Activated CD8-positive, alpha-beta T cell treated with anti-CD3 and anti-CD28 coated beads, Interleukin-2, amount 10 ng/mL, durations not matched to agents 7 days and 5 days (primary cell): ENCODE measurements at regions of chrX and their contacts with region 1.

Region 1: DNA sequence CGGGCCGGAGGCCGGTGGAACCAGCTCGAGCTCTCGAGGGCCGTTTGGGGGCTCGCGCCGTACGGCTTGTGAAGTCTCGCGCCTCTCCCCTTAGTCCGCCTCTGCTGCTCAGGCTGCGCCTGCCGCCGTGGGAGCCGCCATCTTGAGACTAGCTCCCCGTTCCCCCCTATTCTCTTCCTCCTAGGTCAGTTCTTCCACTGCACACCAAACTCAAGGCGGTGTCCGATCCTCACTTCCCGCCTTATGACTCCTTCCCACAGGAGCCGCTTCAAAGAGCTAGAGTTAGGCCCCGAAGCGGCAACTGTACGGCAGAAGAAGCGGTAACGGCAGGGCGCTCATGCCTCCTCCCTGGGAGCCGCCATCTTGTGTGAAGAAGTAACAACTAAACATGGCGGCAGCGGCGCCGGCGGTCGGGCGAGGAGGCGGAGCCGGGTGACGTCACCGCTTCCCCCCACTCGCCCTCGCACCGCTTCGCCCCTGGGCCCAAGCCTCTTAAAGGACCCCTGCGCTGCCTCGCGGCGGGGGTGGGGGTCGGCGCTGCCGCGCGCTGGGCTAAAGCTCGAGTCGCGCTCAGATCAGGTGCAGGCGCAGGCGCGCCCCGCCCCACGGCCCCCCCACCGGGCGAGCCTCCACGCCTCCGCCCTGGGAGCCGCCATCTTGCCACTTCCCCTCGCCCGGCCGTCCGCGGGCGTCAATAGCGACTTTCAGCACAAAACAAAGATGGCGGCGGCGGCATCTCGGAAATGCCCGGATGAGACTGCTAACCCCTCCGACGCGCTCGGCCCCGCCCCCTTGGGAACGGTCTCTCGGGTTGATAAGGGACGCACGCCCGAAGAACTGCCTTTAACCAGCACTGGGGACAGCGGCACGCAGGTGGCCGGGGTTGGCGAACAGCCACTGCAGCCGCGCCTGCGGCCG is at the start of gene HCFC1:
- DNase-seq: peak; percentile 92
- ATAC-seq: peak; percentile 38
- H3K4me3 Mint-ChIP-seq: peak within 1 kb of the TSS; percentile 100
- H3K27ac Mint-ChIP-seq: peak within 1 kb of the TSS; percentile 100
- H3K4me1 Mint-ChIP-seq: peaks cover 32% of the 10 kb centered on the region
- H3K27me3 Mint-ChIP-seq: no peaks in the 10 kb centered on the region
- total RNA-seq, gene HCFC1: 141 to 146 TPM

Region 2: GRCh38 chrX:153828723-153829548 is 142.8 kb before region 1 on chrX:
- CTCF ChIA-PET with region 1: no interaction called
- POLR2A ChIA-PET with region 1: no interaction called
- DNase-seq: no peak
- ATAC-seq: no peak
- H3K4me3 Mint-ChIP-seq: no peak overlapping the region
- H3K27ac Mint-ChIP-seq: no peak overlapping the region
- H3K4me1 Mint-ChIP-seq: peaks cover 6% of the 10 kb centered on the region
- H3K27me3 Mint-ChIP-seq: peaks cover 36% of the 10 kb centered on the region

Region 3: DNA sequence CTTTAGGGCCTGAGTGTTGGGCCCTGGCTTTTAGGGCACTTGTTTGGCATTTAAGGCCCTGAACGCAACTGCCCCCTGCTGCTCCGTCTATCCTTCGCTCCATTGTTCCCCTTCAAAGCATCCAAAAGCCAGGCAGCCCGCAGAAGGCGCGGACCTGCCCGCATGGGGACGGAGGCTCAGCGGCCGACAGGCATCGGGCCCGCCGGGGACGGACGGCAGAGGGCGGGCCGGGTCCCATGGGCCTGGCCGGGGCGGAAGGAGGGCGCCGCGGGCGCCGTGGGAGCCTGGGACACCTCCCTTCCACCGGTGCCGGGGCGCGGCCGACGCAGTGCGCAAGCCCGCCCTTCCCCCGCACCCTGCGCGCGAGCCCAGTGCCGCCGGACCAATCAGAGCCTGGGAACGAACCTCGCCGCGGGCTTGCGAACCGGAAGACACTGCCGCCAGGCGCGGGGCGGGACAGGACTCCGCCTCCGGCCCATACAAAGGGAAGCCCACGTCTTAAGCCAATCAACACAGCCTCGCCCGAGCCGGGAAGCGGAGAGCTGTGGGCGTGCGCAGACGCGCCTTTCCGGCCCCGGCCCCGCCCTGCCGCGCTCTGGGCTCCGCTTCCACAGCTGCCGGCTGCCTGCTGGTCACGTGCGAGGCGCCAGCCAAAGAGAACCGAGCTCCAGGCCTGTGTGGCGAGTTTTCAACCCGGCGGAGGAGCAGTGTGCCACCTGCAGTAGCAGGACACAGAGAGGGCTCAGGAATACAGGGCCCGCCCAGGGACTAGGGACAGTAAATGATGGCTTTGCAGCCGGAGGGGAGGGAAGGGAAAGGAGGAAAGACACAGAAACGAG is 43.6 kb before region 1 on chrX:
- CTCF ChIA-PET with region 1: interaction called, 37 read pairs
- POLR2A ChIA-PET with region 1: interaction called, 90 read pairs
- DNase-seq: peak; percentile 94
- ATAC-seq: peak; percentile 85
- H3K4me3 Mint-ChIP-seq: peak overlapping the region; percentile 86
- H3K27ac Mint-ChIP-seq: peak overlapping the region; percentile 98
- H3K4me1 Mint-ChIP-seq: peaks cover 28% of the 10 kb centered on the region
- H3K27me3 Mint-ChIP-seq: no peaks in the 10 kb centered on the region

Region 4: DNA sequence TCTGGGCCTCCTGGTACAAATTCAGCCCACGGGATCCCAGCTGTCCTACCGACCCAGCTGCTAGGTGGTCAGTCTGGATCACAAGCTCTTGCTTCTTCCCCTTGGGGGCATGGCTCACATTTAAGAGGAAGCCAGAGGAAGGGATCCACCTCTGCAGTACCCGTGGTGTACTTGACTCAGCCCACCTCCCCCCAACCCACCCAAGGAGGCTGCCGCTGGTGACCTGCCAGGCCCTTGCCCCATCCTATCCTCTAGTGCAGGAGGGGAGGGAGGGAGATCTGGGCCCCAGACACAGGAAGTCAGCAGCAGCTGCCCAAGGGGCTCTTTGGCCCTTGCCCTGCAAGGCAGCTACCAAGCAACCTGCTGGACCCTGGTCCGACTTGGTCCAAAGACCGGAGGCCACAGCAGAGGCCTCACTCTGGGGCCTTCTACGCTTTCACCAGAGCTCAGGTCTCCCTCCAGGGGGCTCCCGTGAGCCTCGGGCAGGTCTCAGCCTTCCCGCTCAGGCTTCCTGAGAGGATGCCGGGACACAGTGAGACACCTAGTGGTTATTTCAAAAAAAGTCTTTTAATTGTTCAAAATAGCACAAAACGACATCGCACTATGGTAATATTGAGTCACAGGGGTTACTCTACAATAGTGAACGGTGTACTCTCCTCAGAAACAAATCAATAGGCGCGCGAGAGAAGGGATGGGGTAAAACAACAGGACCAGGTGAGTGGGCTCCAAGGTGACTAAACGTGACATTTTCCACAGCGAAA is 24.5 kb before region 1 on chrX:
- CTCF ChIA-PET with region 1: interaction called, 29 read pairs
- POLR2A ChIA-PET with region 1: interaction called, 6 read pairs
- DNase-seq: peak; percentile 83
- ATAC-seq: peak; percentile 76
- H3K4me3 Mint-ChIP-seq: no peak overlapping the region
- H3K27ac Mint-ChIP-seq: peak overlapping the region; percentile 82
- H3K4me1 Mint-ChIP-seq: peaks cover 49% of the 10 kb centered on the region
- H3K27me3 Mint-ChIP-seq: no peaks in the 10 kb centered on the region

Region 5: GRCh38 chrX:153953342-153953830 is 18.3 kb before region 1 on chrX:
- CTCF ChIA-PET with region 1: interaction called, 29 read pairs
- POLR2A ChIA-PET with region 1: interaction called, 6 read pairs
- DNase-seq: peak; percentile 78
- ATAC-seq: peak; percentile 65
- H3K4me3 Mint-ChIP-seq: no peak overlapping the region
- H3K27ac Mint-ChIP-seq: no peak overlapping the region
- H3K4me1 Mint-ChIP-seq: peaks cover 32% of the 10 kb centered on the region
- H3K27me3 Mint-ChIP-seq: no peaks in the 10 kb centered on the region

Region 6: GRCh38 chrX:153981771-153982533 is 10.2 kb after region 1 on chrX:
- CTCF ChIA-PET with region 1: interaction called, 5 read pairs
- POLR2A ChIA-PET with region 1: interaction called, 117 read pairs
- DNase-seq: peak; percentile 77
- ATAC-seq: peak; percentile 48
- H3K4me3 Mint-ChIP-seq: peak overlapping the region; percentile 52
- H3K27ac Mint-ChIP-seq: peak overlapping the region; percentile 92
- H3K4me1 Mint-ChIP-seq: peaks cover 57% of the 10 kb centered on the region
- H3K27me3 Mint-ChIP-seq: no peaks in the 10 kb centered on the region